ENCODE measurements at regions of chr2 and their contacts with region 1.

Region 1: GRCh38 chr2:33521791-33522281 is 45.4 kb downstream of the RASGRP3 start:
- DNase-seq: peak in 1 of 2 donors; percentile 41
- ATAC-seq: peak; percentile 37 to 74 (median 64)
- H3K4me3 ChIP-seq: no peak overlapping the region
- H3K27ac ChIP-seq: peak overlapping the region in 6 of 10 donors; percentile 1 to 37 (median 10)
- H3K4me1 ChIP-seq: peaks cover 0 to 28% (median 16%) of the 10 kb centered on the region in 9 donors
- H3K27me3 ChIP-seq: no peaks in the 10 kb centered on the region
- CTCF ChIP-seq: no peak

Region 2: DNA sequence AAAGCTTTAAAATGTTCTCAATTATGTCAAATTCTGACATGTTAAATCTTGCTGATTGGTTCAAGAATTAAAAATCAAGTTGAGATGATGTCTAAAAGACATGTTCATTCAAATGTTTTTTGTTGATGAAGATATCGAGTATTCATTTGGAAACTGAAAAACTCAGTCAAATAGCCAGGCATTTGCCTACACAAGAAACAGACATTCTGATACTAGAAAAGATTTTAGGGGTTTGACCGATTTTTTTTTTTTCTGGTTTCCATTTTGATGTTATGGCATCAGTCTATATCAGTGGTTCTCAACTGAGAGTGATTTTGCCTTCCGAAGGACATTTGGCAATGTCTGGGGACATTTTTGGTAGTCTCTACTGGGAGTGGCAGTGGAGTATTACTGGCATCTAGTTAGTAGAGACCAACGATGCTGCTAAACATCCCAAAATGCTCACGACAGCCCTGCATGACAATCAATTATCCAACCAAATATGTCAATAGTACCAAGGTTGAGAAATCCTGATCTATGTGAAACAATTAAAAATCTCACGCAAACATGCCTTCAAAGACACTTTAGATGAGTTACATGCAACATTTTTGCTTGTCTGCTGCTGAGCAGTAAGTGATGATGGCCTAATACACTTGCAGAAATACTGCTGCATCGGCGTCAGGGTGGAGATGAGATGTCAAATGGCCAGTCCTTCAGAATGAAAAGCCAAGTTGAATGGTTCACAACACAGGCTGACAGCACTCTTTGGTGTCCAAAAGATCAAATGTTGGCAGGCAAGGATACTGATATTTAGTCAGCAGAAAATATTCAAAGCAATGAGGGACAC is 32.9 kb before region 1 on chr2:
- intact Hi-C with region 1: loop called in 1 of 10 experiments (anchors 5 kb)
- DNase-seq: no peak
- ATAC-seq: no peak
- H3K4me3 ChIP-seq: no peak overlapping the region
- H3K27ac ChIP-seq: no peak overlapping the region
- H3K4me1 ChIP-seq: peaks cover 10 to 75% (median 56%) of the 10 kb centered on the region in 9 donors
- H3K27me3 ChIP-seq: no peaks in the 10 kb centered on the region
- CTCF ChIP-seq: no peak

Measured in heart right ventricle (tissue), 16 donors.